Naive thymus-derived CD8-positive, alpha-beta T cell (primary cell): ENCODE measurements at regions of chr1 and their contacts with region 1.

Region 1: GRCh38 chr1:53945433-53946251 is at the start of gene IFT25:
- DNase-seq: peak; percentile 95 to 100 (median 99)
- ATAC-seq: peak; percentile 80 to 82
- H3K4me3 Mint-ChIP-seq: peak within 1 kb of the TSS; percentile 93 to 98 (median 96)
- H3K27ac Mint-ChIP-seq: peak within 1 kb of the TSS; percentile 87 to 98 (median 97)
- H3K4me1 Mint-ChIP-seq: peaks cover 31 to 64% (median 57%) of the 10 kb centered on the region in 4 donors
- H3K27me3 Mint-ChIP-seq: no peaks in the 10 kb centered on the region
- polyA plus RNA-seq, gene IFT25: 34.9 to 53.7 (median 46.8) TPM

Region 2: DNA sequence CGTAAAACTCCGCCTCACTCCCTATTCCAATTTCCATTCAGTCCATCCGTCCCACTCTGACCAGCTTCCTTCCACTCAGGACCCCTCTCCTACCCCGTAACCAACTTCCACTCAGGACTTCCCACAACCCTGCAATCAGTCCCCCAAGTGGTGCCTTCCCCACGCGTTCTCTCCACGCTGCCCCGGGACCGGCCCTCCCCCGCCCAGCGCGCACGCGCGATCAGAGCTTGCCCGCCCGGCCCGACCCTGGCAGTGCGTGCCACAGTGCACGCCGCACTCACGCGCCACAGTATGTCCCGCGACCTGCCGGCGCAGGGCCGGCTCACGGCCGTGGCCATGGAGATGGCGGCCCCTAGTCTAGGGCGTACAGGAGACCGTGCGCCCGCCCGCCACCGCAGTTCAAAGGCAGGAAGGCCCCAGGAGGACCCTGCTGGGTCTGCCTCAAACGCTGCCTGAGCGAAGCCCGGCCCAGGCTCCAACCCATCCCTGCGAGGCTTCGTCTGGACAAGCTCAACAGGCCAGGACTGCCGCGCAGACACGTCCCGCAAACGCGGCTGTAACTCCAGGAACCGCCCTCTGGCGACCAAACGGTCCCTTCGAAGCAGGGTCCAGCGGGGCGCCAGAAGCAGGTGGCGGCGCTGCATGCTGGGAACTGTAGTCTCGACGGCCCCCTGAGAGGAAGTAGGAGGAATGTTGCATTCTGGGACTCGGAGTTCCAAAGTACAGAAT is 107.6 kb before region 1 on chr1 and contains the start of gene NDC1:
- POLR2A ChIA-PET with region 1: interaction called, 16 read pairs
- DNase-seq: peak; percentile 79 to 99 (median 90)
- ATAC-seq: peak; percentile 89 to 92
- H3K4me3 Mint-ChIP-seq: peak within 1 kb of the TSS; percentile 93 to 99 (median 96)
- H3K27ac Mint-ChIP-seq: peak within 1 kb of the TSS; percentile 96 to 99 (median 98)
- H3K4me1 Mint-ChIP-seq: peaks cover 8 to 35% (median 29%) of the 10 kb centered on the region in 4 donors
- H3K27me3 Mint-ChIP-seq: peaks cover 0 to 2% (median 1%) of the 10 kb centered on the region in 5 donors
- polyA plus RNA-seq, gene NDC1: 5.8 to 6.4 (median 6.3) TPM

Region 3: DNA sequence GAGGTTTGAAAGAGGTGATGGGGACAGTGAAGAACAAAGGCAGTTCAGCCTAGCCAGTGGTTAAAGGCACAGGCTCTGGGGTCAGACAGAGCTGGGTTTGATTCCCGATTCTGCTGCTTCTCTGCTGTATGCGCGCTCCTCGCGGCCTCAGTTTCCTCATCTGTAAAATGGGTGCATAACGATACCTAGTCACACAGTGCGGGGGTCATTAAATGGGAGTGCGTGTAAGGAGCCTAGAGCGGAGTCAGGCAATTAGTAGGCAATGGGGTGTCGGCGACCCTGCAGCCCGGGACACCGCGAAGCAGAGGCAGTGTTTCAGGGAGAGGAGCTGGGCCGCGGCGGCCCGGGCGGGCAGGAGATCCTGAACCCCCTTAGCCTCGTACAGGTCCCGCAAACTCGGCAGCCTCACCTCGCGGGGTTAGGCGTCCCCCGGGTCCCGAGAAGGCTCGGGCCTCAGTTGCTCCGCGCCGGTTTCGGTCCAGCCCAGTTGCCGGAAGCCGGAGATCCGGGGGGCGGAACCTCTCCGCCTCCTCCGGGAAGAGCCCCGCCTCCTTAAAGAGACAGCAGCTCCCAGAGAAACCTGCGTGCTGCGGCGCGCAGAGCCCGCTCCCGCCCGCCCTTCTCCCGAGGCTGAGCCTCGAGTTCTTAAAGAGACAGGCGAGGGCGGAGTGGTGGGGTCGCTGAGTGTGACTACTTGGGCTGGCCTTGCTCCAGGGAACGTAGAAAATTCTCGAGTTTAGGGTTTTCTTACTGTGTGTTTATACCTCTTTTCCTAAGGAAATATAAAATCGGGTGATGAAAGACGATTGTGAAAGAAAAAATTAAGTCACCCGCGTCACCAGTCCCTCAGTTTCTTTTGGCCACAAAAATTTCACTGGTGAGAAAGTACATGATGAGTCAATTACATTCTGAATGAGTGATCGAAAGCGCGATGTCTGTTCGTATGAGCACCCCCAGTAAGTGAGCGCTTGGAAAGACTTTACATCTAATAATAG is 56.0 kb before region 1 on chr1 and contains the start of gene YIPF1:
- POLR2A ChIA-PET with region 1: interaction called, 24 read pairs
- DNase-seq: peak; percentile 74 to 90 (median 81)
- ATAC-seq: peak; percentile 97 to 99
- H3K4me3 Mint-ChIP-seq: peak within 1 kb of the TSS; percentile 93 to 97 (median 95)
- H3K27ac Mint-ChIP-seq: peak within 1 kb of the TSS; percentile 93 to 97 (median 94)
- H3K4me1 Mint-ChIP-seq: peaks cover 13 to 52% (median 47%) of the 10 kb centered on the region in 4 donors
- H3K27me3 Mint-ChIP-seq: peaks cover 0 to 4% (median 0%) of the 10 kb centered on the region in 5 donors
- polyA plus RNA-seq, gene YIPF1: 22.3 to 25.6 (median 24.2) TPM

Region 4: DNA sequence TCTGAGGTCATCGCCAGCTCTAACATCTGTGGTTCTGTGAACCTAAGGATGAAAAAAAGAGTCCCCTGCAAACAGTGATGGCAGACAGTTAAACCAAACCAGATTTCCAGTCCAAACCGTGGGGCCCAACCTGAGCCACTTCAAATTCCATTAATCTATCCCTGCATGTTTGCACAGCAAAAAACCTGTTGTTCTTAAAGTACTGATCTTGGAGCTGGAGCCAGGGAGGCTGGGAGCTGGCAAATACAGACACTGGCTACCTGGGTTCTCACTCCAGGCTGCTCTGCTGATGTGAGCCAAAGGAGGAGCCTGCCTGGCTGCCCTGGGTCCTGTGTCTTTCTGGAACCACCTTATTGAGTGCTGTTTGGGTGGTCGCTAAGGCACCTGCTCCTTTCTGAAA is 55.9 kb after region 1 on chr1:
- POLR2A ChIA-PET with region 1: no interaction called
- DNase-seq: no peak
- ATAC-seq: no peak
- H3K4me3 Mint-ChIP-seq: no peak overlapping the region
- H3K27ac Mint-ChIP-seq: no peak overlapping the region
- H3K4me1 Mint-ChIP-seq: no peaks in the 10 kb centered on the region
- H3K27me3 Mint-ChIP-seq: peaks cover 0 to 7% (median 3%) of the 10 kb centered on the region in 5 donors

Region 5: GRCh38 chr1:54037476-54037875 is 91.8 kb after region 1 on chr1:
- POLR2A ChIA-PET with region 1: no interaction called
- DNase-seq: no peak
- ATAC-seq: no peak
- H3K4me3 Mint-ChIP-seq: no peak overlapping the region
- H3K27ac Mint-ChIP-seq: peak overlapping the region in 7 of 10 donors; percentile 3 to 83 (median 12)
- H3K4me1 Mint-ChIP-seq: peaks cover 0 to 8% (median 2%) of the 10 kb centered on the region in 4 donors
- H3K27me3 Mint-ChIP-seq: no peaks in the 10 kb centered on the region

Region 6: GRCh38 chr1:54052934-54053744 is 107.5 kb after region 1 on chr1 and contains the starts of genes TCEANC2 and TMEM59:
- POLR2A ChIA-PET with region 1: interaction called, 19 read pairs
- DNase-seq: peak; percentile 89 to 99 (median 98)
- ATAC-seq: peak; percentile 91 to 92
- H3K4me3 Mint-ChIP-seq: no peak within 1 kb of the TSS
- H3K27ac Mint-ChIP-seq: no peak within 1 kb of the TSS
- H3K4me1 Mint-ChIP-seq: peaks cover 20 to 52% (median 47%) of the 10 kb centered on the region in 4 donors
- H3K27me3 Mint-ChIP-seq: no peaks in the 10 kb centered on the region
- polyA plus RNA-seq, gene TCEANC2: 5.5 to 7.2 (median 6.6) TPM
- polyA plus RNA-seq, gene TMEM59: 410 to 670 (median 489) TPM